Dorsolateral prefrontal cortex (tissue), 120 donors: ENCODE measurements at regions of chr17 and their contacts with region 1.

Region 1: DNA sequence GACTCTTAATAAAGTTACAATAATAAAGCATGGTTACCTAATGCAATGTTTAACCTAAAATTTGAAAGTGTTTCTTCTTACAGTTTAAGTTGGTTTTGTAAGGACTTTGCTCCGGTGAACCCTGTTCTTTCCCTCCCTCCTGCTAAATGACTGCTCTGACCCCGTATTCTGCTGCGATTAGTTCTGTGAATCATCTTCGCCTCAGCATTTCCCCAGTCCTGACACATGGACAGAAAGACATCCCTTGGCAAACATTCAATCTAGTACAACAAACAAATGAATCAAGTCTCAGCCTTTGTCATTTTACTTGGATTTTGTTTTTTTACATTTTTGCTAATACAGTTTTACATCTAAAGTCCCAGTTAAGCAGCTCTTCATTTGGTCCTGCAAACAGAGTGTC is 15.4 kb downstream of the KCNJ2 start:
- DNase-seq: no peak
- H3K4me3 ChIP-seq: peak overlapping the region in 6 of 59 donors; percentile 14 to 33 (median 19)
- H3K27ac ChIP-seq: peak overlapping the region in 52 of 59 donors; percentile 4 to 86 (median 64)
- H3K27me3 ChIP-seq: no peaks in the 10 kb centered on the region
- CTCF ChIP-seq: no peak

Region 2: GRCh38 chr17:70265471-70265870 is 80.7 kb after region 1 on chr17:
- intact Hi-C with region 1: loop called in 1 of 2 experiments (anchors 10 kb)
- DNase-seq: no peak
- H3K4me3 ChIP-seq: no peak overlapping the region
- H3K27ac ChIP-seq: peak overlapping the region in 33 of 59 donors; percentile 0 to 77 (median 46)
- H3K27me3 ChIP-seq: no peaks in the 10 kb centered on the region
- CTCF ChIP-seq: no peak

Region 3: DNA sequence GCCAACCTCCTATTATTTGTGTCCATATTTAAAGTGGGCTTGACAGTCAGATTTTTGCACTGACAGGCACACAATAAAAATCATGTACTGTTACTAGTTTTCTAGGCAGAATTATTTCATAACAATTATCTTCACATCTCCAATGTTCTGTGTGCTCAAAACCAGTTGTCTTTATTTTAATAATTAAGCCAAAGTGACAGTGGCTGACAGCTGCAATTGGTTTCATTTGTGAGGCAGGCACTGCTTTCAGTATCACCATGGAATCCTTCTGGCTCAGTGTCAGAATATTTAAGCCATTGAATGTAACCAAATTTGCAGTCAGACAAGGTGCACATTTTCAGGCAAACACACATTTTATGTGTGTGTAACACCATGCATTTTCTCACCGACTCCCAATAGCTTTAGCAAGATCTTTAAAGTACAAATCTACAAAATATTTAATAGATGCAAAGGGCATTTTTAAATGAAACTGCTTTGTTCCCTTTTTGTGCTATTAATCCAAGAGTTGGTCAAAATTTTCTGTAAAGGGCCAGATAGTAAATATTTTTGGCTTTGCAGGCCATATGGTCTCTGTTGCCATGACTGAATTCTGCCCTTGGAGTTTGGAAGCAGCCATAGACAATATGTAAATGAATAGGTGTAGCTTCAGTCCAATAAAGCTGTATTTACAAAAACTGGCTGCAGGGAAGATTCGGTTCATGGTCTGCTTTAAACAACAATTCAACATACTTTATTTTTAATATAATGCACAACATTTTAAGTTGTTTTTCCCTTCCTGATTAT is 470.6 kb after region 1 on chr17:
- intact Hi-C with region 1: no loop called
- DNase-seq: no peak
- H3K4me3 ChIP-seq: peak overlapping the region in 37 of 59 donors; percentile 3 to 45 (median 19)
- H3K27ac ChIP-seq: peak overlapping the region in 58 of 59 donors; percentile 12 to 94 (median 80)
- H3K27me3 ChIP-seq: no peaks in the 10 kb centered on the region
- CTCF ChIP-seq: no peak